ENCODE measurements at regions of chr7 and their contacts with region 1.

Region 1: GRCh38 chr7:105759670-105760550 is 116.5 kb downstream of the ATXN7L1 start:
- DNase-seq: no peak
- H3K4me3 ChIP-seq: no peak overlapping the region
- H3K27ac ChIP-seq: no peak overlapping the region
- H3K27me3 ChIP-seq: no peaks in the 10 kb centered on the region
- CTCF ChIP-seq: peak; percentile 62

Region 2: GRCh38 chr7:105876091-105876963 is 116.4 kb after region 1 on chr7 and contains the start of gene ATXN7L1:
- CTCF ChIA-PET with region 1: interaction called, 17 read pairs
- POLR2A ChIA-PET with region 1: interaction called, 4 read pairs
- DNase-seq: peak; percentile 94
- H3K4me3 ChIP-seq: peak within 1 kb of the TSS; percentile 82
- H3K27ac ChIP-seq: peak within 1 kb of the TSS; percentile 95
- H3K27me3 ChIP-seq: no peaks in the 10 kb centered on the region
- CTCF ChIP-seq: peak; percentile 34; the same call in 1 of the 2 replicates
- polyA plus RNA-seq, gene ATXN7L1: 5.0 and 5.5 TPM in 2 replicates

Measured in AG04450 (cell line).